HEK293 (cell line): ENCODE measurements at regions of chr7 and their contacts with region 1.

Region 1: DNA sequence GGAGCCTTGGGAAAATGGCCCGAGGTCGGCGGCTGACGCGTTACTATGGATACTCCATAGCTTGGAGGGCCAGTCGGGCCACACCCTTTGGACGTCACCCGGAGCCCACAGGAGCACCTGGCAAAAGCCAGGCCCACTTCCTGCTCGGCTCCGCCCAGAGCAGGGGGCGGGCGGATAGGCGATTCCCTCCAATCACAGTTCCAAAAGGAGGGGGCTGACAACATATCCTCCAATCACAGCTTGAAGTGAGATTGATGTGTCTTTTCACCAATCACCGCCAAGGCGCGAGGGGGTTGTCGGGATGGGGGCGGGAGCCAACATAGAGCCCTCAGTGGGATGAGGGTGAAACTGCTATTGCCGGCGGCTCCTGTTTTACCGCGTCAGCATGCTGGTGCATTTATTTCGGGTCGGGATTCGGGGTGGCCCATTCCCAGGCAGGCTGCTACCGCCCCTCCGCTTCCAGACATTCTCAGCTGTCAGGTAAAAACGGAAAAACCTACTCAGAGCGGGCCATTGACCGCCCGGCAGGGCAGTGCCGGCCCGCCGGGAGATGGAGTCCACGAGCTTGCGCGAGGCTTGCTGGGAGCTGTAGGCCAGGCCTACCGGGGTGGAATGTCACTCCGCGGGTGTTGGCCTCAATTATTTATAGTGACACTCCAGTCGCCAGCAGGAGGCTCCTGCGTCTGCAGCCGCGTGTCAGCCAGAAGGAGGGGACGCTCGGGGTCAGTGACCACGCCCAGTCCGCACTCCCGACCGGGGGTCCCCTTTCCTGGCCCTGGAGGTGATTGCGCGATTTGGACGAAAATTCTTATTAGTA is at the start of gene ABCB8:
- H3K4me3 ChIP-seq: peak within 1 kb of the TSS; percentile 84
- H3K27ac ChIP-seq: no peak within 1 kb of the TSS
- H3K4me1 ChIP-seq: no peaks in the 10 kb centered on the region
- CTCF ChIP-seq: peak; percentile 97

Region 2: GRCh38 chr7:151008511-151009323 is 19.6 kb before region 1 on chr7:
- CTCF ChIA-PET with region 1: interaction called, 22 read pairs
- POLR2A ChIA-PET with region 1: interaction called, 6 read pairs
- H3K4me3 ChIP-seq: no peak overlapping the region
- H3K27ac ChIP-seq: no peak overlapping the region
- H3K4me1 ChIP-seq: no peaks in the 10 kb centered on the region
- CTCF ChIP-seq: peak; percentile 53; the same call in 1 of the 2 replicates

Region 3: DNA sequence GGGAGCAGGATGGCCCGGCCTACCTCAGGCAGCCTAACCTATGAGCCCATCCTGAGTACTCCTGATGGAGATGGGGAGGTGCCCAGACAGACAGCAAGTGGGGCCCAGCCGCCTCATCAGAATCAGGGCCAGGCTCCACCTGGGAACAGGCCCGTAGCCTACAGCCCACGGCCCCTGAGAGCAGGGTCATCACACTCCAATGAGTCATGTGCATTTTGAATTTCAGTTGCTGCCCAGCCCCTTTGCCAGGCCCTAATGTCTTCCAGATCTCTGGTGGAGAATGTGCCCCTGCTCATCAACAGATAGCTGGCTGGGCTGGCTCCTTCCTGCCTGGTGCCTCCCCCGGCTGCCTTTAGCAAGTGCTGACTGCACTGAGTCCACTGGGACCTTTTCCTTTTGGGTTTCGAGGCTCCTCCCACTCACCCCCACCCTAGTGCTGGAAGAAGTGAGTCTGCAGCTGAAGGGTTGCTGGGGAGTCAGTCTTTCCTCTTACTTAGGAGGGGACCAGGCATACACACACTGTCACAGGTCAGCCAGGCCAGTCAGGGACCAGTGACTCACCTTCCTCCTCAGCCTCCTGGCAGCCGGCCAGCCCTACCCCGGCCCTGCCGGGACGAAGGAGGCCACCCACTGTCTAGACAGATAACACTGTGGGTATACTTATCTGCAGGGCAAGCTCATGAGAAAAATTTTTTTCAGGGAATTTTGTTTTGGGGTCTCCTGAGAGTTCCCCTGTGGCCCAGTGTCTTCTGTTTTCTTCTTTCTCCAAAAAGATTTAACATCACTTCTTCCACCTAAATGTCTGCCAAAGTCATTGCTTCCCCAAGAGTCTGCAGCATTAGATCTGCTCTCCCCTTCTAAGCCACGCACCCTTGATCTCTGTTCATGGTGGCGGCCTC is 10.9 kb after region 1 on chr7:
- CTCF ChIA-PET with region 1: interaction called, 4 read pairs
- POLR2A ChIA-PET with region 1: interaction called, 26 read pairs
- H3K4me3 ChIP-seq: no peak overlapping the region
- H3K27ac ChIP-seq: peak overlapping the region; percentile 13
- H3K4me1 ChIP-seq: peaks cover 6% of the 10 kb centered on the region
- CTCF ChIP-seq: no peak

Region 4: DNA sequence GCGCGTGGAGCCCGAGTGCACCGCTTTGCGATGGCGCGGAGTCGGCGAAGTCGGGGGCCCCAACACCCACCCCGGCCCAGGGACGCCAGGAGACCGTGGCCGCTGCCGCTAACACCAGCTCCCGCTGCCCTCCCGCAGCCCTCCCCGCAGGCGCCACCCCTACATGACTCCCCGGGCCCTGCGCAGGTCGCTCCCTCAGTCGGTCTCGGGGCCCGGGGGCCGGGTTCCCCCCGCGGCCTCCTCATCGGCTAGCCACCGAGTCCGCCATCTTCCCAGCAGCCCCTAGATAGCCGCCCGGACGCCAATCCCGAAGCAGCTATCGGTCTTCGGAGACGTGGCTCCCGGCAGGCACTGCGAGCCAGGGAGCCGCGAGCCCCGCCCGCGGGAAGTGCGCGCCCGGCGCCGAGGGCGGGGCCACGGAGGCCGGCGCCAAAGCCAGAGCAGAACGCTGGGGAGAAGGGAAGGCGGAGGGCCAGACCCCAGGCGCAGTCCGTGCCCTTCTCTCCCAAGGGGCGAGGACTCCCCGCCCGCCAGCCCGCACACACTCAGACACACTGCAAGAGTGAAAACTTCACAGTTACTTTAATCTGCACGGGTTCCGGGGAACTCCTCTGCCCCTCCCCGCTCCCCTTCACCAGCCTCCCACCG is 52.3 kb after region 1 on chr7 and contains the start of gene FASTK:
- CTCF ChIA-PET with region 1: interaction called, 6 read pairs
- POLR2A ChIA-PET with region 1: interaction called, 19 read pairs
- H3K4me3 ChIP-seq: peak within 1 kb of the TSS; percentile 89
- H3K27ac ChIP-seq: peak within 1 kb of the TSS; percentile 75
- H3K4me1 ChIP-seq: peaks cover 7% of the 10 kb centered on the region; the same call in 1 of the 2 replicates
- CTCF ChIP-seq: no peak

Region 5: GRCh38 chr7:151226875-151227782 is 198.8 kb after region 1 on chr7 and contains the start of gene ABCF2:
- CTCF ChIA-PET with region 1: no interaction called
- POLR2A ChIA-PET with region 1: interaction called, 14 read pairs
- H3K4me3 ChIP-seq: peak within 1 kb of the TSS; percentile 90
- H3K27ac ChIP-seq: peak within 1 kb of the TSS; percentile 46
- H3K4me1 ChIP-seq: peaks cover 3% of the 10 kb centered on the region; the same call in 1 of the 2 replicates
- CTCF ChIP-seq: peak; percentile 66; the same call in 1 of the 2 replicates